ENCODE measurements at regions of chr3 and their contacts with region 1.

Region 1: GRCh38 chr3:190321789-190322603 is at the start of gene CLDN1:
- DNase-seq: no peak
- H3K4me3 ChIP-seq: peak within 1 kb of the TSS; percentile 64
- CTCF ChIP-seq: peak; percentile 95

Region 2: GRCh38 chr3:189967254-189967865 is 354.6 kb before region 1 on chr3:
- CTCF ChIA-PET with region 1: interaction called, 80 read pairs
- POLR2A ChIA-PET with region 1: no interaction called
- DNase-seq: no peak
- H3K4me3 ChIP-seq: no peak overlapping the region
- CTCF ChIP-seq: peak; percentile 57

Region 3: DNA sequence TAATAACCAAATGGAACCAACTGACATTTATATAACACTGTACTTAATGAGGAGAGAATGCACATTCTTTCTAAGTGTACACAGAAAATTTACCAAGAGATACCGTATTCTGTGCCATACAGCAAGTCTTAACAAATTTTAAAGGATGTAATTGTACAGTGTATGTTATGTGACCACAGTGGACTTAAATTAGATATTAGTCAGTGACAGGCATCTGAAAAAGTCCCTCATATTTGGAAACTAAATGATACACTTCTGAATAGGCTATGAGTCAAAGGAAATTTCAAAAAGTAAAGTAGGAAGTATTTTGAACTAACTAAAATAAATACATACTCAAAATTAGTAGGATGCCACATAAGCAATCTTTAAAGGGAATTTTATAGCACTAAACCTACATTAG is 141.7 kb before region 1 on chr3:
- CTCF ChIA-PET with region 1: no interaction called
- POLR2A ChIA-PET with region 1: no interaction called
- DNase-seq: no peak
- H3K4me3 ChIP-seq: no peak overlapping the region
- CTCF ChIP-seq: no peak

Region 4: DNA sequence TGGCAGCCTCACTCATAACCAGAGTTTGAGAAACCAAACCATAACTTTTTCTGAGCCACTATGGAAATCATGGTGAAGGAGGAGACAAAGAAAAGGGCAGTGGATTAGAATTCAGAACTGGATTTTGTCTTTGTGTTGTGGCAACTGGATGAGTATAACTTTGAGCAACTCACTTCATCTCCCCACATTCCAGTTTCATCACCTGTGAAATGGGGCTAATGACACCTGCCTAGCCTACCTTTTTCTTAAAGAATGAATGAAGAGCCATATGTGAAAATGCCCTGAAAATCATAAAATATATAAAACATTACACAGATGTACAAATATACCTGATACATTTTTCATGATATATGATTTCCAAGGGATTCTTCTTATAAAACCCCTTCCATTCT is 91.6 kb before region 1 on chr3:
- CTCF ChIA-PET with region 1: interaction called, 201 read pairs
- POLR2A ChIA-PET with region 1: no interaction called
- DNase-seq: no peak
- H3K4me3 ChIP-seq: no peak overlapping the region
- CTCF ChIP-seq: no peak

Region 5: GRCh38 chr3:190339130-190339529 is 17.1 kb after region 1 on chr3:
- CTCF ChIA-PET with region 1: interaction called, 107 read pairs
- POLR2A ChIA-PET with region 1: no interaction called
- DNase-seq: no peak
- H3K4me3 ChIP-seq: no peak overlapping the region
- CTCF ChIP-seq: no peak

Region 6: DNA sequence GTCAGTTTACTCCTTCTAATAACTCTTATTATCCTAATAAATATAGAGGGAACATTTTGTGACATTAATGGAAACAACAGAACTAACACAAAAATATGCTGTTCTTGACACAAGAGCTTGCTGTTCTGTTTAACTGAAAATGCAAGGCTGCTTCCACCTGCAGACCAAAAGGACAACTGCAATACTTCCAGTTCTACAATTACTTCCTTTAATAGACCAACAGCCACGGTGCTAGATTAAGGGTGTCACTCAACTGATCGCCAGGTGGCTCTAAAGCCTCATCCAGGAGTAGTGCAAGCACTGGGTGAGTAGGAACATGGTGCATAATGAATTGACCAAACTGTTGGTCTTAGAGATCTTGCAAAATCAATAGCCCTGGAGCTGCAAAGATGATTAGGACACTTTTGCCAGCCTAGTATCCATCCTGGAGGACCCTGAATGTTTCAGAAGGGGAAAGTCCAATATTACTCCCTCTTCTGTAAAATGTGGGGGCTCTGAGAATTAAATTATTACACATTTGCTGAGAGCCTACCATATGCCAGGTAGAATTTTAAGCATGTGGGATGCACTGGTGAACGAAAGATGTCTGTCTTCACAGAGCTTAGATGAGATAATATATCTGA is 62.4 kb after region 1 on chr3:
- CTCF ChIA-PET with region 1: interaction called, 21 read pairs
- POLR2A ChIA-PET with region 1: no interaction called
- DNase-seq: no peak
- H3K4me3 ChIP-seq: no peak overlapping the region
- CTCF ChIP-seq: peak; percentile 43

Region 7: GRCh38 chr3:190443257-190443656 is 121.3 kb after region 1 on chr3:
- CTCF ChIA-PET with region 1: interaction called, 21 read pairs
- POLR2A ChIA-PET with region 1: no interaction called
- DNase-seq: no peak
- H3K4me3 ChIP-seq: no peak overlapping the region
- CTCF ChIP-seq: peak; percentile 32

Region 8: DNA sequence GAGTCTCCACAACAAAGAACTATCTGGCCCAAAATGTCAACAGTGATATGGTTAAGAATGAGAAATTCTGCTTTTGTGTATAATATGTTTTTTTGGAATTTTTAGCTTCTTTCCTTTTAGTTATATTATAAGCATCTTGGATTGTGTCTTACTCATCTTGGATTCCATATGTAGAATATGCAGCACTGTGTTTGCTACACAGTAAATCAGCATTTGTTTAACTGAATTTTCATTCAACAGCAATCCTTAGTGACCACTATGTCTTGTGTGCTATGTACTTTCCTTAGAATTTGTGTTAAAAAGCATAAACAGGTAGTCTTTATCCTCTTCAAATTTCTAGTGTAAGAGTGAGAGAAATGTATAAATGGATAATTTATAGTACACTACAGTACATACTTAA is 145.9 kb after region 1 on chr3:
- CTCF ChIA-PET with region 1: no interaction called
- POLR2A ChIA-PET with region 1: no interaction called
- DNase-seq: no peak
- H3K4me3 ChIP-seq: no peak overlapping the region
- CTCF ChIP-seq: no peak

Measured in AG04449 (cell line).